ENCODE measurements at regions of chr18 and their contacts with region 1.

Region 1: DNA sequence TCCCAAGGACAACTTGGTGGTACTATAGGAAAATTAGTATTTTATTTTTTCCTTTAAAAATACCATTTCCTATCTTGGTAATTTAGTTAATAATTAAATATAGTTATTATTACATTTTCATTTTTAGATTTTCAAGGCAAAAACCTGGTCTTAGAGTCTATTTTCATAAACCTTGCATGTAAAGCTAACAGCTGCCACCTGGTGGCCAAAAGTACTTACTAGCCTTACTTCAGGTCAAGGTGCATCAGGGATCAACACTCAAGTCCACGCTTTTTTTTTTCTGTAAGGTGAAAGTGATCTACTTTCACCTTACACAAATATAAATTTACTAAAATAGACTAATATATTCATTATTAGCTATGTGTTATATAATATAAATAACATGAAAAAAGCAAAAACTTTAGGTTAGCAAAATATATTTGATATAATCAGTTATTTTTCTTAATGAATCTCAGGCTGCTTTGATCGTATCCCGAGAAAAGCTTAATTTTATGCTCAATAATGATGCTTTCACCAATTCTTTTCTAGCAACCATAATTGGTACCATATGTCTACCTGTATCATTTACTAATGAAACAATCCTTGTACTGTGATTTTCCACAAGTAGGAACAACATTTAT is 62.5 kb downstream of the RELCH start:
- DNase-seq: peak; percentile 49
- H3K4me3 ChIP-seq: no peak overlapping the region
- H3K27ac ChIP-seq: no peak overlapping the region
- H3K27me3 ChIP-seq: no peaks in the 10 kb centered on the region
- CTCF ChIP-seq: peak; percentile 85

Region 2: GRCh38 chr18:61852496-61852895 is 397.1 kb before region 1 on chr18:
- CTCF ChIA-PET with region 1: interaction called, 10 read pairs
- POLR2A ChIA-PET with region 1: no interaction called
- DNase-seq: no peak
- H3K4me3 ChIP-seq: no peak overlapping the region
- H3K27ac ChIP-seq: no peak overlapping the region
- H3K27me3 ChIP-seq: no peaks in the 10 kb centered on the region
- CTCF ChIP-seq: no peak

Region 3: GRCh38 chr18:62061821-62062478 is 187.6 kb before region 1 on chr18:
- CTCF ChIA-PET with region 1: no interaction called
- POLR2A ChIA-PET with region 1: no interaction called
- DNase-seq: no peak
- H3K4me3 ChIP-seq: no peak overlapping the region
- H3K27ac ChIP-seq: no peak overlapping the region
- H3K27me3 ChIP-seq: no peaks in the 10 kb centered on the region
- CTCF ChIP-seq: no peak

Region 4: GRCh38 chr18:62198259-62198658 is 51.3 kb before region 1 on chr18:
- CTCF ChIA-PET with region 1: interaction called, 10 read pairs
- POLR2A ChIA-PET with region 1: no interaction called
- DNase-seq: no peak
- H3K4me3 ChIP-seq: no peak overlapping the region
- H3K27ac ChIP-seq: no peak overlapping the region
- H3K27me3 ChIP-seq: no peaks in the 10 kb centered on the region
- CTCF ChIP-seq: no peak

Region 5: GRCh38 chr18:62239475-62239874 is 10.1 kb before region 1 on chr18:
- CTCF ChIA-PET with region 1: interaction called, 20 read pairs
- POLR2A ChIA-PET with region 1: no interaction called
- DNase-seq: no peak
- H3K4me3 ChIP-seq: no peak overlapping the region
- H3K27ac ChIP-seq: no peak overlapping the region
- H3K27me3 ChIP-seq: no peaks in the 10 kb centered on the region
- CTCF ChIP-seq: no peak

Region 6: GRCh38 chr18:62281684-62282083 is 32.1 kb after region 1 on chr18:
- CTCF ChIA-PET with region 1: interaction called, 16 read pairs
- POLR2A ChIA-PET with region 1: no interaction called
- DNase-seq: peak; percentile 34
- H3K4me3 ChIP-seq: no peak overlapping the region
- H3K27ac ChIP-seq: no peak overlapping the region
- H3K27me3 ChIP-seq: no peaks in the 10 kb centered on the region
- CTCF ChIP-seq: no peak